ENCODE measurements at regions of chr9 and their contacts with region 1.

Region 1: GRCh38 chr9:19379697-19380046 is 364 bp downstream of the RPS6 start:
- DNase-seq: no peak
- ATAC-seq: peak; percentile 14
- H3K4me3 ChIP-seq: peak overlapping the region; percentile 94
- H3K27ac ChIP-seq: peak overlapping the region; percentile 50
- H3K4me1 ChIP-seq: 0 out of 2 replicates have a peak, but pooled peaks cover 21% of the 10 kb centered on the region
- H3K27me3 ChIP-seq: no peaks in the 10 kb centered on the region
- CTCF ChIP-seq: no peak

Region 2: GRCh38 chr9:19408693-19409400 is 29.2 kb after region 1 on chr9 and contains the start of gene ACER2:
- CTCF ChIA-PET with region 1: no interaction called
- POLR2A ChIA-PET with region 1: no interaction called
- intact Hi-C with region 1: loop called (anchors 1 kb)
- DNase-seq: peak; percentile 93
- ATAC-seq: peak; percentile 85
- H3K4me3 ChIP-seq: peak within 1 kb of the TSS; percentile 92
- H3K27ac ChIP-seq: peak within 1 kb of the TSS; percentile 36
- H3K4me1 ChIP-seq: peaks cover 34% of the 10 kb centered on the region
- H3K27me3 ChIP-seq: no peaks in the 10 kb centered on the region
- CTCF ChIP-seq: no peak
- total RNA-seq, gene ACER2: 2.4 and 4.4 TPM in 2 replicates

Measured in PC-3 (cell line).